Naive thymus-derived CD4-positive, alpha-beta T cell (primary cell): ENCODE measurements at regions of chr10 and their contacts with region 1.

Region 1: DNA sequence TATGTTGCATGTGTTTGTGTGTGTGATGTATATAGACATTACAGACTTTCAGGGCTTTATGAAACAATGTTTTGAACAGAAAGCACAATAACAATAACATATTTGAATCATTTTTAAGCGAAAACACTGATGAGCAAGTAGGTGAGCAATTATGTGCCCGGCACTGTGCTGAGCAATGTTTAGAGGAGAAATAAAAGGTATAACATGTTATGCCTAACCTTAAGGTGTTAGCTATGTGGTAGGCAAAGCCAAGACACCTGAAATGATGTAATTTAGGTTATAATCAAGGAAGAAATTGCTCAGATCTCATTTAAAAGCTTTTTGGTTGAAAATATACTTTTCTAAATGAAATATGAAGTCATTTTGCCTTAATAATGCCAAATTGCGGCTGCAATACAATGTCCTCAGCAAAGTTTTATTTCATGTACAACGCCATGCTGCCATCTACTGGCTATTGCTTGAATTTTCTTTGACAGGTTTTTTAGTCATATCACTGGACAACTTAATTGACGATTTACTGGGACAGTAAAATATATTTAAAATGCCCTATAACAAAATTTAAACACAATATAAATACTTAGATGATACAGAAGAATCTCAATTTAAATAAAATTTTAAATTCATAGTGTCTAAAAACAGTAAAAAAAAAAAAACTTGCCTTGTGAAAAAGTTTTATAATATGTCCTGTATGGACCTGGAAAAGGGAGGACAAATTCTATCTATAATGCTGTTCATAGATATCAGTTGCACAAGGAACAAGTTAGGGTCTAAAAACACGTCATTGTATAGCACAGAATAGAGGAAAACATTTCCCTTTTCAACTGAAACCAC is 131.1 kb upstream of the CDK1 start:
- DNase-seq: peak in 7 of 9 donors; percentile 16 to 61 (median 47)
- ATAC-seq: peak; percentile 67
- H3K4me3 ChIP-seq: no peak overlapping the region
- H3K4me3 Mint-ChIP-seq: no peak overlapping the region
- H3K27ac ChIP-seq: no peak overlapping the region
- H3K27ac Mint-ChIP-seq: peak overlapping the region in 2 of 9 donors; percentile 8 to 14
- H3K4me1 ChIP-seq: peaks cover 0 to 7% of the 10 kb centered on the region in 2 donors
- H3K4me1 Mint-ChIP-seq: peaks cover 19 to 70% (median 46%) of the 10 kb centered on the region in 7 donors
- H3K27me3 ChIP-seq: no peaks in the 10 kb centered on the region
- H3K27me3 Mint-ChIP-seq: no peaks in the 10 kb centered on the region

Region 2: GRCh38 chr10:60099998-60100747 is 547.0 kb before region 1 on chr10:
- CTCF ChIA-PET with region 1: interaction called, 6 read pairs
- POLR2A ChIA-PET with region 1: no interaction called
- intact Hi-C with region 1: loop called in 1 of 2 experiments (anchors 1 kb)
- DNase-seq: peak in 6 of 9 donors; percentile 14 to 43 (median 31)
- ATAC-seq: peak; percentile 69
- H3K4me3 ChIP-seq: no peak overlapping the region
- H3K4me3 Mint-ChIP-seq: no peak overlapping the region
- H3K27ac ChIP-seq: no peak overlapping the region
- H3K27ac Mint-ChIP-seq: no peak overlapping the region
- H3K4me1 ChIP-seq: no peaks in the 10 kb centered on the region
- H3K4me1 Mint-ChIP-seq: no peaks in the 10 kb centered on the region
- H3K27me3 ChIP-seq: no peaks in the 10 kb centered on the region
- H3K27me3 Mint-ChIP-seq: no peaks in the 10 kb centered on the region

Region 3: DNA sequence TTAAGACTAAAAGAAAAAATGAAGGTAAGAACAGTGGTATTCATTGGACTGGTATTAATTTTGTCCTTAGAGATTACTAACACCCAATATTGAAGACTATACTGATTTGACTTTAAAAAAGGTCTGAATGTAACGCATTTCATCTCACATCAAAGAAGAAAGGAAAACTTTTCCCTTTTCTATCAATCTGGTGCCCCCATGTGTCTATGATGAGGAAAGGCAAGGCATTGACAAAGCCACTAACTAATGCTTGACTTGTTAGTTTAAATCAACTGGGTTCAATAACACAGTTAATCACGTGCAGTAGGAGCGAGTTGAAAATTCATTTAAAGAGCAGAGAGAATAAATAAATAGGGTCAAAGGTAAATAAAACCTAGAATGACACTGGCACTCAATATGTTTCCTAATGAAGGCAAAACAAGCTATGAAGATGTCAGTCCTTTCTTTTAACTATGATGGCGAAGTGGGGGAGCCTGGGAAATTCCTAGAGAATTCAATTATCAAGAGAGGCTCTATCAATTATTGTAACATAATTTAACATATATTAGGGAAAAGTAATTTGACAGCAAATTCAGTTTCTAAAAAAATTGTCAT is 438.4 kb before region 1 on chr10:
- CTCF ChIA-PET with region 1: interaction called, 3 read pairs
- POLR2A ChIA-PET with region 1: no interaction called
- intact Hi-C with region 1: loop called (anchors 1 kb)
- DNase-seq: no peak
- ATAC-seq: no peak
- H3K4me3 ChIP-seq: no peak overlapping the region
- H3K4me3 Mint-ChIP-seq: no peak overlapping the region
- H3K27ac ChIP-seq: no peak overlapping the region
- H3K27ac Mint-ChIP-seq: peak overlapping the region in 1 of 9 donors; percentile 72
- H3K4me1 ChIP-seq: peaks cover 0 to 11% of the 10 kb centered on the region in 2 donors
- H3K4me1 Mint-ChIP-seq: peaks cover 12 to 37% (median 28%) of the 10 kb centered on the region in 7 donors
- H3K27me3 ChIP-seq: no peaks in the 10 kb centered on the region
- H3K27me3 Mint-ChIP-seq: no peaks in the 10 kb centered on the region

Region 4: DNA sequence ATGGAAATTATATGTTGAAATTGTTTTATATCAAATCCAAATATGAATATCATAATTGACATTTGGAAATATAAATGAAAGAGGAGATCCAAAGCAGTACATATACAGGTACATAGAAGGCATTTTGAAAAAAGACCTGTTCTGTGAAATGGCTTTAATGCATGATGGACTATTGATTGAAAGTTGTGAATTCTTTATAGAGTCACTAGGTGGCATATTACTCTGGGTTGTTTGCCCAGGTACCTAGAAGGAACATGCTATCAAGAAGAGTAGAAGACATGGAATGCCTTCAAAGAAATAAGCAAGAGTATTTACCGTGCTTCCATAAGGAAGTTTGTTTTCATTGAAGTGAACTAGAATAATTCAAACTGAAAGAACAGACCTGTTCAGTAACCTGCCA is 97.5 kb before region 1 on chr10:
- CTCF ChIA-PET with region 1: no interaction called
- POLR2A ChIA-PET with region 1: no interaction called
- intact Hi-C with region 1: loop called in 1 of 2 experiments (anchors 1 kb)
- DNase-seq: peak in 2 of 9 donors; percentile 11 to 25
- ATAC-seq: no peak
- H3K4me3 ChIP-seq: no peak overlapping the region
- H3K4me3 Mint-ChIP-seq: no peak overlapping the region
- H3K27ac ChIP-seq: no peak overlapping the region
- H3K27ac Mint-ChIP-seq: no peak overlapping the region
- H3K4me1 ChIP-seq: no peaks in the 10 kb centered on the region
- H3K4me1 Mint-ChIP-seq: peaks cover 0 to 8% (median 0%) of the 10 kb centered on the region in 7 donors
- H3K27me3 ChIP-seq: no peaks in the 10 kb centered on the region
- H3K27me3 Mint-ChIP-seq: no peaks in the 10 kb centered on the region

Region 5: DNA sequence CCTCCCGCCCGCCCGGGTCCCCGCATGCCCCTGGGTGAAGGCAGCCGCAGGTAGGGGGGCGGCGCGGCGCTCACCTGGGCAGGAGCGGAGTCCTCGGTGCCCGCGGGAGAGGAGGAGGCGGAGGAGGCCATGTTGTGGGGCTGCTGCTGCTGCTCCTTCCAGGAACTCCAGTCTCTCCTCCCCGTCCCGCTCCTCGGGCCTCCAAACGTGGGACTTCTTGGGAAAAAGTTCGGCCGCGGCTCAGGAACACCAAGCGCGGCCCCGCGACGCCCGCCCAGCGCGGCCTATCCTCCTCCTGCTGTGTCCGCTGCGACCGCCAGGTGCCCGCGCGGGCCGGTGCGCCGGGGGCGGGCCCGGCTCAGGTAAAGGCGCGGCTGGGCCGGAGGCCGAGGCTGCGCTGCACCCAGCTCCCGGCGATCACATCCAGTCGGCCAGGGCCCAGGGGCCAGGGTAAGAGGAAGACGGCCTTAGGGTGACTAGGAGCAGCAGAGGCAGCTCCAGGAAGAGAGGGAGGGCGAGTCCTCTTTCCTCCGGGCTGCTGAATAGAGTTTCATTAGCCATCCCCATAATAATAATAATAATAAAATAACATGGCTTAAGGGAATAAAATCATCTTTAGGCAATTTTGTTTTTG is 86.1 kb after region 1 on chr10:
- CTCF ChIA-PET with region 1: no interaction called
- POLR2A ChIA-PET with region 1: interaction called, 3 read pairs
- intact Hi-C with region 1: loop called (anchors 2 kb)
- DNase-seq: peak; percentile 29 to 66 (median 55)
- ATAC-seq: peak; percentile 80
- H3K4me3 ChIP-seq: peak overlapping the region; percentile 63
- H3K4me3 Mint-ChIP-seq: peak overlapping the region; percentile 59 to 96 (median 80)
- H3K27ac ChIP-seq: peak overlapping the region; percentile 89
- H3K27ac Mint-ChIP-seq: peak overlapping the region in 7 of 9 donors; percentile 33 to 98 (median 58)
- H3K4me1 ChIP-seq: peaks cover 17 to 35% of the 10 kb centered on the region in 2 donors
- H3K4me1 Mint-ChIP-seq: peaks cover 15 to 39% (median 31%) of the 10 kb centered on the region in 7 donors
- H3K27me3 ChIP-seq: no peaks in the 10 kb centered on the region
- H3K27me3 Mint-ChIP-seq: peaks cover 0 to 7% (median 2%) of the 10 kb centered on the region in 5 donors